Esophagus muscularis mucosa (tissue), 4 donors: ENCODE measurements at regions of chr14 and their contacts with region 1.

Region 1: GRCh38 chr14:59275653-59276052 is 87.2 kb downstream of the DAAM1 start:
- DNase-seq: no peak
- H3K4me3 ChIP-seq: no peak overlapping the region
- H3K27ac ChIP-seq: peak overlapping the region; percentile 65 to 80 (median 71)
- H3K4me1 ChIP-seq: peaks cover 28 to 90% (median 83%) of the 10 kb centered on the region in 4 donors
- H3K27me3 ChIP-seq: no peaks in the 10 kb centered on the region
- CTCF ChIP-seq: no peak
- EP300 ChIP-seq: no peak
- POLR2A ChIP-seq: no peak

Region 2: GRCh38 chr14:58663494-58664415 is 611.9 kb before region 1 on chr14:
- intact Hi-C with region 1: no loop called
- DNase-seq: no peak
- H3K4me3 ChIP-seq: no peak overlapping the region
- H3K27ac ChIP-seq: peak overlapping the region in 1 of 4 donors; percentile 8
- H3K4me1 ChIP-seq: no peaks in the 10 kb centered on the region
- H3K27me3 ChIP-seq: no peaks in the 10 kb centered on the region
- CTCF ChIP-seq: no peak
- EP300 ChIP-seq: no peak
- POLR2A ChIP-seq: no peak

Region 3: GRCh38 chr14:59208224-59208814 is 67.3 kb before region 1 on chr14:
- intact Hi-C with region 1: no loop called
- DNase-seq: no peak
- H3K4me3 ChIP-seq: no peak overlapping the region
- H3K27ac ChIP-seq: peak overlapping the region in 3 of 4 donors; percentile 64 to 74 (median 71)
- H3K4me1 ChIP-seq: peaks cover 29 to 97% (median 93%) of the 10 kb centered on the region in 4 donors
- H3K27me3 ChIP-seq: no peaks in the 10 kb centered on the region
- CTCF ChIP-seq: no peak
- EP300 ChIP-seq: no peak
- POLR2A ChIP-seq: no peak

Region 4: GRCh38 chr14:59428581-59429012 is 152.9 kb after region 1 on chr14:
- intact Hi-C with region 1: loop called (anchors 10 kb)
- DNase-seq: no peak
- H3K4me3 ChIP-seq: no peak overlapping the region
- H3K27ac ChIP-seq: peak overlapping the region; percentile 56 to 77 (median 72)
- H3K4me1 ChIP-seq: peaks cover 34 to 68% (median 46%) of the 10 kb centered on the region in 4 donors
- H3K27me3 ChIP-seq: no peaks in the 10 kb centered on the region
- CTCF ChIP-seq: peak; percentile 43 to 57 (median 48)
- EP300 ChIP-seq: no peak
- POLR2A ChIP-seq: no peak